ENCODE measurements at regions of chr11 and their contacts with region 1.

Region 1: GRCh38 chr11:2099516-2100340 is 39.5 kb downstream of the IGF2 start:
- H3K4me3 ChIP-seq: no peak overlapping the region
- H3K27ac ChIP-seq: no peak overlapping the region
- H3K4me1 ChIP-seq: no peaks in the 10 kb centered on the region; the same call in 1 of the 2 replicates
- CTCF ChIP-seq: no peak

Region 2: GRCh38 chr11:2120359-2121100 is 20.8 kb after region 1 on chr11:
- CTCF ChIA-PET with region 1: no interaction called
- POLR2A ChIA-PET with region 1: no interaction called
- H3K4me3 ChIP-seq: no peak overlapping the region
- H3K27ac ChIP-seq: no peak overlapping the region
- H3K4me1 ChIP-seq: no peaks in the 10 kb centered on the region
- CTCF ChIP-seq: no peak

Region 3: DNA sequence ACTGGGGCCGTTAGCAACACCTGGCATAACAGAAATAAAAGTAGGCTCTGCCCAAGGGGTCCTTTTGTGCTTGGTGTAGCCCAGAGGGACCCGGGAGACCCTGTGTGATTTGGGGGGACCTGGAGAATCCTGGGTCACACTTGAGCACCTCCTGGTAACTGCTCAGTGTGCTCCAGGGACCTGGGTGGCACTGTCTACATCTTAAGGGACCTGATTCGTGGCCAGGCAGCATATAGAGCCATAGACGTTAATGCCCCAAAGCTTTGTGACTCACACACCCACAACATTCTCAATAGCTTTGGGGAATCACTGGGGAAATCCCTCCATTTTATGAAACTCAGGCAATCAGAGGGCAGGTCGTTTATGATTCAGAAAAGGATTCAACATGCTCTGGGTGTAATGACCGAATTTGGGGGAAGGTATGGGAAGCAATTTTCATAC is 43.1 kb after region 1 on chr11:
- CTCF ChIA-PET with region 1: no interaction called
- POLR2A ChIA-PET with region 1: interaction called, 10 read pairs
- H3K4me3 ChIP-seq: no peak overlapping the region
- H3K27ac ChIP-seq: no peak overlapping the region
- H3K4me1 ChIP-seq: no peaks in the 10 kb centered on the region
- CTCF ChIP-seq: no peak

Measured in HEK293 (cell line).